Activated CD8-positive, alpha-beta T cell treated with anti-CD3 and anti-CD28 coated beads, Interleukin-2, amount 10 ng/mL, durations not matched to agents 7 days and 5 days (primary cell): ENCODE measurements at regions of chr2 and their contacts with region 1.

Region 1: GRCh38 chr2:200713003-200713703 is 98.6 kb upstream of the BZW1 start:
- DNase-seq: peak; percentile 97
- ATAC-seq: peak; percentile 99
- H3K4me3 Mint-ChIP-seq: peak overlapping the region; percentile 71
- H3K27ac Mint-ChIP-seq: peak overlapping the region; percentile 98
- H3K4me1 Mint-ChIP-seq: peaks cover 18% of the 10 kb centered on the region
- H3K27me3 Mint-ChIP-seq: no peaks in the 10 kb centered on the region

Region 2: GRCh38 chr2:200735061-200735460 is 21.9 kb after region 1 on chr2:
- CTCF ChIA-PET with region 1: interaction called, 19 read pairs
- POLR2A ChIA-PET with region 1: interaction called, 10 read pairs
- DNase-seq: no peak
- ATAC-seq: no peak
- H3K4me3 Mint-ChIP-seq: no peak overlapping the region
- H3K27ac Mint-ChIP-seq: no peak overlapping the region
- H3K4me1 Mint-ChIP-seq: peaks cover 11% of the 10 kb centered on the region
- H3K27me3 Mint-ChIP-seq: peaks cover 13% of the 10 kb centered on the region

Region 3: GRCh38 chr2:200811336-200812121 is 98.4 kb after region 1 on chr2 and contains the start of gene BZW1:
- CTCF ChIA-PET with region 1: interaction called, 16 read pairs
- POLR2A ChIA-PET with region 1: interaction called, 16 read pairs
- DNase-seq: peak; percentile 98
- ATAC-seq: peak; percentile 84
- H3K4me3 Mint-ChIP-seq: peak within 1 kb of the TSS; percentile 99
- H3K27ac Mint-ChIP-seq: peak within 1 kb of the TSS; percentile 99
- H3K4me1 Mint-ChIP-seq: peaks cover 52% of the 10 kb centered on the region
- H3K27me3 Mint-ChIP-seq: no peaks in the 10 kb centered on the region
- total RNA-seq, gene BZW1: 276 to 304 TPM

Region 4: DNA sequence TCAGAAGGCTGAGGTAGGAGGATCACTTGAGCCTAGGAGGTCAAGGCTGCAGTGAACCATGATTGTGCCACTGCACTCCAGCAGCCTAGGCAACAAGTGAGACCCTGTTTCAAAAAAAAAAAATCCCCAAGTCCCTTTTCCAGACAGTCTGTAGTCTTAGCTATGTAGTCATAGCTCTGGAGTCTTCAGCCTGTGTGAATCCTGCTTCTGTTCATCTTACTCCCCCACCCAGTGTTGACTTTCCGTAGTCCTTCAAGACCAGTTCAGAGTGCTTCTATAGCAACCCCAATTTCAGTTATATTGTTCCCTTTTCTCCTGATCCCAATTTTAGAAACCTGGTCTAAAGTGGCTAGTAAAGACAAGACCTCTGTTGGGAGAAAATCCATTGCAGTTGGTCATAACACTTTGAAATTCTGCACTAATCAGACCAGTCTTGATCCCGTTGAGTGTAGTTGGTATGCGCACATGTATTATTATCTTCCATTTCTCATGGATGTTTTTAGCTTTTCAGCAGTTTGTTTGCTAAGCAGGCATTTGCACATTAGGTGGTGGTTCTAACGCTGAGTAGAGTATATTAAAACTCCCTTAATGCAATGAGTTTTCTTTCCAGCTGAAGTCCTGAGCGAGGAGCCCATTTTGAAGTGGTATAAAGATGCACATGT is 107.6 kb after region 1 on chr2:
- CTCF ChIA-PET with region 1: interaction called, 16 read pairs
- POLR2A ChIA-PET with region 1: interaction called, 3 read pairs
- DNase-seq: no peak
- ATAC-seq: no peak
- H3K4me3 Mint-ChIP-seq: no peak overlapping the region
- H3K27ac Mint-ChIP-seq: no peak overlapping the region
- H3K4me1 Mint-ChIP-seq: peaks cover 5% of the 10 kb centered on the region
- H3K27me3 Mint-ChIP-seq: no peaks in the 10 kb centered on the region

Region 5: DNA sequence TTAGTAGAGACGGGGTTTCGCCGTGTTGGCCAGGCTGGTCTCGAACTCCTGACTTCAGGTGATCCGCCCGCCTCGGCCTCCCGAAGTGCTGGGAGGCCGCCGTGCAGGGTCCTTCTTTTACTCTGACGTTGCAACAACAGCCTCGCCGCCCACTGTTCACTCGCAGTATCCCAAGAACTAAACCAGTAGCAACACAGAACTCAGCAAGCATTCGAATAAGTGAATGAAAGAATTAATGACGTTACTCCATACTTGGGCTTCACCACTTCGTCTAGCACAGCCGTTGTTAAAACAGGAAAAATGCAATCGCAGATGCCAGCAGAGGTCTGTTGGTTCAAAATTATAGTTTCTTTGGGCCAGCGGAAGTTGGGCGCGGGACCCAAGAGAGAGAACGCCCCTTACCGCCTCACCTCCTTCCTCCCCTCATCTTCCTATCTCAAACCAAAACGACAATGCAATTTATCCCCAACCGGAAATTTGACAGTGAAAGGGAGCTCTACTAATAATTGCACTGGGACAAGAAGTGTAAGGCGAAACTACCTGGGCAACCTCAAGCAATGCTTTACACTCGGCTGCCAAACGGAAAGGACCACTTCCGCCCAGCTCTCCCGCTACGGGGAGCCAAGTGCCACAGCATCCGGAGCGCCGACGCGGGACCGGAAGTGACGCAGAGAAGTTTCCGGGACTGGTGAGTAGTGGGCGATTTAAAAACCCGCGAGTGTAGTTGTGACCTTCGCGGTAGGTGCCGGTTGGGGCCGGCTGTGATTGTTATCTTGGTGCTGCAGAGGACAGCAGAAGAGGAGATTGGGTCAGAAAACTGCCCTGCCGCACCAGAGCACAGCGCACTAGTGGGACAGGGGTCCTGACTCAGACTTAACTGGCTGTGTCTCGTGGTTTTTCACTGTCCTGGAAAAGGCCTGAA is 175.8 kb after region 1 on chr2 and contains the starts of genes NIF3L1 and PPIL3:
- CTCF ChIA-PET with region 1: interaction called, 3 read pairs
- POLR2A ChIA-PET with region 1: interaction called, 17 read pairs
- DNase-seq: peak; percentile 99
- ATAC-seq: peak; percentile 86
- H3K4me3 Mint-ChIP-seq: peak within 1 kb of the TSS; percentile 90
- H3K27ac Mint-ChIP-seq: peak within 1 kb of the TSS; percentile 98
- H3K4me1 Mint-ChIP-seq: peaks cover 49% of the 10 kb centered on the region
- H3K27me3 Mint-ChIP-seq: no peaks in the 10 kb centered on the region
- total RNA-seq, gene NIF3L1: 37.0 to 39.0 TPM
- total RNA-seq, gene PPIL3: 81.6 to 82.9 TPM